ENCODE measurements at regions of chr17 and their contacts with region 1.

Region 1: GRCh38 chr17:38674749-38675615 is at the start of gene EPOP:
- DNase-seq: peak; percentile 86
- H3K4me3 ChIP-seq: peak within 1 kb of the TSS; percentile 42 to 65 (median 54)
- H3K27ac ChIP-seq: peak within 1 kb of the TSS in 3 of 4 donors; percentile 35 to 42 (median 36)
- H3K4me1 ChIP-seq: peaks cover 8 to 30% (median 23%) of the 10 kb centered on the region in 4 donors
- H3K27me3 ChIP-seq: peaks cover 64% of the 10 kb centered on the region
- CTCF ChIP-seq: no peak
- EP300 ChIP-seq: no peak
- POLR2A ChIP-seq: no peak
- total RNA-seq, gene EPOP: 0.14 to 3.8 (median 0.61) TPM

Region 2: DNA sequence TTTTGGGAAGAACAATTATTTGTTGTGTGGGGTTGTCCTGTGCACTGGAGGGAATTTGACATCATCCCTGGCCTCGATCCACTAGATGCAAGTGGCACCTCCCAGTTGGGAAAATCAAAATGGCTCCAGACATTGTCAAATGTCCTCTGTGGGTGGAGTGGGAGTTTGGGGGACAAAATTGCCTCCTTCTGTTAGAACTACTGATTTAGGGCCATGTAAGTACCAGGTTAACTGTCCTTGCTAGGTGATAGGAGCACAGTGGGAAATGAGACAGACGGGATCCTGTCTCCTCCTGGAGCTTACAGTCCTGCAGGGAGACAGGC is 189.9 kb before region 1 on chr17:
- in situ Hi-C with region 1: loop called in 1 of 4 experiments (anchors 25 kb)
- intact Hi-C with region 1: no loop called
- DNase-seq: no peak
- H3K4me3 ChIP-seq: no peak overlapping the region
- H3K27ac ChIP-seq: peak overlapping the region in 3 of 4 donors; percentile 19 to 71 (median 36)
- H3K4me1 ChIP-seq: peaks cover 2 to 7% (median 4%) of the 10 kb centered on the region in 4 donors
- H3K27me3 ChIP-seq: no peaks in the 10 kb centered on the region
- CTCF ChIP-seq: peak in 1 of 5 experiments; percentile 4
- EP300 ChIP-seq: no peak
- POLR2A ChIP-seq: no peak

Region 3: DNA sequence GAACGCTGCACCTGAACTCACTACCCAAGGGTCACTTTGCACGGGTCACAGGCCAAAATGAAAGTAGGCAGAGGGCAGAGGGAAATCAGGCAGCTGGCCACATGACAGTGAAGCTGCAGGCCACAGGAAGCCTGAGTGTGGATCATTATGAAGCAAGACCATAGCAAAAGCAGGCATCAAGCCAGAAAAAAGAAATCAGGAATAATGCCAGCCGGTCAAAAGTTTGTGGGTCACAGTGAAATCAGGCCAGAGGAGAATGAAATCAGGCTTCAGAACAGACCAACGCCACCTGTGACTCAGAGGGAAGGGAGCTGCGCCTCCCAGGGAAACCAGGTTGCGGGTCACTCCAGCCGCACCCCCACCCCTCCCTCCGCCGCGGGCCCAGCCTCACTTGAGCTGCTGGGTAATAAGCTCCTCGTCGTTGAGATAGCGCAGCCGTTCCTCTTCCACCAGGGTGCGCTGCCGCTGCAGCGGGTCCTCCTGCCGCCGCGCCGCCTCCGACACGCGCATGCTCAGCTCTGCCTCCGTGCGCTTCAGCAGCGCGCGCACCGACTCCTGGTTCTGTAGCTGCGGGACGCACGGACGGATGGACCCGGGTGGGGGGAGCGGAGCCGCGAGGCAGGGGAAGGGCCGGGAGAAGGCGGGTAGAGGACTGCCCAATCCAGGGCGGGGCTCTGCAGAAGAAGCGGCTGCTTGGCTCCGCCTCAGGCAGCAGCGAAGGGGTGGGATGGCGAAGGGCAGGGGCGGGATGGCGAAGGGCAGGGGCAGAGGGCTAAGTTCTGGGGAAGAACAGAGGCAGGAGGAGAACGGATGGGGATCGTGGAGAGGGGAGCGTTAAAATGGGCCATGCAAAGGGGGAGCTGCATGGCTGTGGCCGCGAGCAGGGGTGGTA is 116.9 kb before region 1 on chr17:
- in situ Hi-C with region 1: loop called in 1 of 4 experiments (anchors 25 kb)
- intact Hi-C with region 1: no loop called
- DNase-seq: peak; percentile 95
- H3K4me3 ChIP-seq: peak overlapping the region in 3 of 4 donors; percentile 18 to 46 (median 28)
- H3K27ac ChIP-seq: peak overlapping the region in 3 of 4 donors; percentile 3 to 45 (median 31)
- H3K4me1 ChIP-seq: peaks cover 9 to 30% (median 26%) of the 10 kb centered on the region in 4 donors
- H3K27me3 ChIP-seq: peaks cover 40% of the 10 kb centered on the region
- CTCF ChIP-seq: peak; percentile 86 to 94 (median 88)
- EP300 ChIP-seq: no peak
- POLR2A ChIP-seq: no peak

Region 4: GRCh38 chr17:38729886-38730525 is 55.0 kb after region 1 on chr17 and contains the start of gene CISD3:
- in situ Hi-C with region 1: loop called in 3 of 4 experiments (anchors 5 to 10 kb)
- intact Hi-C with region 1: loop called (anchors 2 kb)
- DNase-seq: peak; percentile 93
- H3K4me3 ChIP-seq: peak within 1 kb of the TSS; percentile 75 to 90 (median 81)
- H3K27ac ChIP-seq: peak within 1 kb of the TSS; percentile 94 to 98 (median 96)
- H3K4me1 ChIP-seq: peaks cover 26 to 87% (median 43%) of the 10 kb centered on the region in 4 donors
- H3K27me3 ChIP-seq: no peaks in the 10 kb centered on the region
- CTCF ChIP-seq: peak; percentile 49 to 75 (median 70)
- EP300 ChIP-seq: no peak
- POLR2A ChIP-seq: no peak
- total RNA-seq, gene CISD3: 11.2 to 35.0 (median 20.5) TPM